ENCODE measurements at regions of chr6 and their contacts with region 1.

Region 1: GRCh38 chr6:131451321-131452144 is 121.5 kb upstream of the ARG1 start:
- DNase-seq: peak; percentile 31
- H3K4me3 Mint-ChIP-seq: no peak overlapping the region
- H3K27ac Mint-ChIP-seq: peak overlapping the region; percentile 83
- H3K4me1 Mint-ChIP-seq: peaks cover 40% of the 10 kb centered on the region
- H3K27me3 Mint-ChIP-seq: no peaks in the 10 kb centered on the region

Region 2: DNA sequence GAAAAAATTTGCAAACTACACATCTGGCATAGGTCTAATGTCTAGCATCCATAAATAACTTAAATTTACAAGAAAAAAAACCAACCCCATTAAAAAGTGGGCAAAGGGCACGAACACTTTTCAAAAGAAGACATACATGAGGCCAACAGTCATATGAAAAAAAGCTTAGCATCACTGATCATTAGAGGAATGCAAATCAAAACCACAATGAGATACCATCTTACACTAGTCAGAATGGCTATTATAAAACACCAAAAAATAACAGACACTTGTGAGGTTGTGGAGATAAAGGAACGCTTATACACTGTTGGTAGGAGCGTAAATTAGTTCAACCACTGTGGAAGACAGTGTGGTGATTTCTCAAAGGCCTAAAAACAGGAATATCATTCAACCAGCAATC is 354.7 kb before region 1 on chr6:
- CTCF ChIA-PET with region 1: no interaction called
- intact Hi-C with region 1: no loop called
- DNase-seq: no peak
- H3K4me3 Mint-ChIP-seq: no peak overlapping the region
- H3K27ac Mint-ChIP-seq: no peak overlapping the region
- H3K4me1 Mint-ChIP-seq: no peaks in the 10 kb centered on the region
- H3K27me3 Mint-ChIP-seq: no peaks in the 10 kb centered on the region

Region 3: GRCh38 chr6:131269565-131270391 is 181.8 kb before region 1 on chr6:
- CTCF ChIA-PET with region 1: interaction called, 3 read pairs
- intact Hi-C with region 1: loop called (anchors 5 kb)
- DNase-seq: peak; percentile 26
- H3K4me3 Mint-ChIP-seq: no peak overlapping the region
- H3K27ac Mint-ChIP-seq: peak overlapping the region; percentile 67
- H3K4me1 Mint-ChIP-seq: peaks cover 42% of the 10 kb centered on the region
- H3K27me3 Mint-ChIP-seq: no peaks in the 10 kb centered on the region

Region 4: DNA sequence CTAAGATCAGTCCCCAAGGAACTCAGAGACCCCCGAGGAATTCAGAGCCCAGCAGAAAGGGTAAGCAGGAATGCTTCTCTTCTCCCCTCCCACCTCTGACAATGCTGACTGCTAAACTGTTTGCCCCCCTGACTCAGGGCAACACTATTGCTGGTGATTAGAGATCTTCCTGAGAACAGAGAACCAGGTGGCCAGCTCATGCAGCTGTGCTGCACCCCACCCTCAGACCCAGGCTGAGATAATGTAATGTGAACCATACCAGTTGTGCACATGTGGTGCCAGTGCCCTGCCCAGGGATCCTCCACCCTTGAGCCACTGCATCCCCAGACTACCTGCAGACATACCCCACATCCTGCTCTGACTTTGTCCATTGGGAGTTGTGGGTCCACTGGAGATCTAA is 17.6 kb before region 1 on chr6:
- CTCF ChIA-PET with region 1: no interaction called
- intact Hi-C with region 1: no loop called
- DNase-seq: no peak
- H3K4me3 Mint-ChIP-seq: no peak overlapping the region
- H3K27ac Mint-ChIP-seq: no peak overlapping the region
- H3K4me1 Mint-ChIP-seq: peaks cover 28% of the 10 kb centered on the region
- H3K27me3 Mint-ChIP-seq: no peaks in the 10 kb centered on the region

Region 5: DNA sequence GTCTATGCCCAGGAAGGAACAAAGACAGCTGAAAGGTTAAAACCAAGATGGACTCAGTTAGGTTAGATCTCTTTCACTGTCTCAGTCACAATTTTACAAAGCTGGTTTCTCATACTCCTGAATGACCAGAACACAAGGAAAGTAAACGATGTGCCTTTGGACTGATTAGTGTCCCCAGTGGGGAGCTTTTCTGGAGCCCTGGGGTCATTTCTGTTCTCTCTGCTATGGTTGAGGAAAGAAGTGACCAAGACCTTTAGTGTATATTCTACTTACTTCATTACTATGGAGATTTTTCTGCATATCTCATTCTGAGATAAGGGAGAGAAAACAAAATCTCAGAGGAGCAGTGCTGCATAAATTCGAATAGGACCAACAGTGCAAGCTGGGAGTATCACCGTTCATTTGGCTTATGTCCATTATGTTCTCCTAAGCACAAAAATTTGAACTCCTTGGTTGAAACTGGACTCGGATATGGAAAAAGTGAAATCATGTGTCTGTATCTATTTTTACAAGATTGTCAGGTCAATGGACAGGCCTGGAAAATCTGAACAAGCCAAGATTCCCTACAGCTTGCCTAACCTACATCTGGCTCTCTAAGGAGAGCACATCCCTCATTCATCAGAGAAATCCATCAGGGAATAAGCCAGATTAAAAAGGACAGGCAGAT is 321.9 kb after region 1 on chr6:
- CTCF ChIA-PET with region 1: no interaction called
- intact Hi-C with region 1: no loop called
- DNase-seq: no peak
- H3K4me3 Mint-ChIP-seq: no peak overlapping the region
- H3K27ac Mint-ChIP-seq: no peak overlapping the region
- H3K4me1 Mint-ChIP-seq: no peaks in the 10 kb centered on the region
- H3K27me3 Mint-ChIP-seq: peaks cover 7% of the 10 kb centered on the region

Measured in activated naive CD4-positive, alpha-beta T cell treated with anti-CD3 and anti-CD28 coated beads for 36 hours (primary cell).